H1 (cell line): ENCODE measurements at regions of chr10 and their contacts with region 1.

Region 1: GRCh38 chr10:3785257-3785850 is 345 bp upstream of the KLF6 start:
- DNase-seq: peak; percentile 92 to 98
- H3K4me3 ChIP-seq: peak overlapping the region; percentile 72 to 91 (median 86)
- H3K27ac ChIP-seq: peak overlapping the region; percentile 95
- H3K4me1 ChIP-seq: peaks cover 5 to 17% (median 12%) of the 10 kb centered on the region in 4 experiments
- H3K27me3 ChIP-seq: no peaks in the 10 kb centered on the region
- CTCF ChIP-seq: no peak
- EP300 ChIP-seq: peak in 1 of 2 experiments; percentile 16; a peak in 1 of 3 replicates
- POLR2A ChIP-seq: peak; percentile 93 to 99
- RAD21 ChIP-seq: 0 out of 4 replicates have a peak, but pooled peaks of 1 of the 2 experiments have one; percentile 2

Region 2: DNA sequence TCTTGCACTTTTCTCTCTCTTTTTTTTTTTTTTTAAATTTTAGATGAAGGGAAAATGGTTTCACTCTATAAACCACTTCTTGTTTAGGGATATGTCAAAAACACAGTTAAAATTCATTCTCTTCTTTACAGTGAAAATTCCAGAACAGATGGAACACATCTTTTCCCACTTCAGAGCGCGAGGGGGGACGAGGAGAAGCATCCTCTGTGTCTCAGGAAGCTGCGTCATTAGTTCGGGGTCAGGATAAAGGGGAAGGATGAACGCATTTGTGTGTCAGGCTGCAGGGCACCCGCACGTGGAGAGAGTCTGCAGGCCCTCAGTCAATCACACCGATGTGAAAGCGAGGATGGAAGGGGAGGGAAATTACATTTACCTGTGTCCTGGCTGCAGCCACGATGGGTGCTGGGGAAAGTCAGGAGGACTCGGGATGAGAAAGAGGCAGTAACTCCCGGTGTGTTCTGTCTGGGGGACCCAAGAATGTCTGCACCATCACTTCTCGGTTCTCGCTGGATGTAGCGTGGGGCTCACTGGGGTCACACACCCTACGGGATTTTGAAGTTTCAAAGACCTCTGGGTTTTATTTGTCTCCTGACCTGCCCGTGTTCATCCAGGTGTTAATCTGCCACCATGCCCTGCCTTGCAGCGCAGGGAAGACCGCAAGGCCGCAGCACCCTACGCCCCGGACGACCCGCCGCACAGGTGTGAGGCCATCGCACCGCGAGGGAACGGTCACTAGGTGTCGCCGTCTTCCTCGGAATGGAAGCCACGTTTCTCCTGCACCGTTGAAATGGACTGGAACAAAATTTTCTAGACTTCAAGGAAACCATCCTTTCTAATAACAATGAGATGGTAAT is 546.1 kb before region 1 on chr10:
- CTCF ChIA-PET with region 1: interaction called, 5 read pairs
- POLR2A ChIA-PET with region 1: interaction called, 12 read pairs
- DNase-seq: peak; percentile 58 to 85
- H3K4me3 ChIP-seq: no peak overlapping the region
- H3K27ac ChIP-seq: no peak overlapping the region
- H3K4me1 ChIP-seq: no peaks in the 10 kb centered on the region; a peak in 2 of 7 replicates
- H3K27me3 ChIP-seq: no peaks in the 10 kb centered on the region
- CTCF ChIP-seq: peak; percentile 89 to 100 (median 92)
- EP300 ChIP-seq: no peak
- POLR2A ChIP-seq: no peak
- RAD21 ChIP-seq: peak; percentile 98 to 99

Region 3: GRCh38 chr10:3720228-3721019 is 64.9 kb before region 1 on chr10:
- CTCF ChIA-PET with region 1: no interaction called
- POLR2A ChIA-PET with region 1: no interaction called
- DNase-seq: no peak
- H3K4me3 ChIP-seq: no peak overlapping the region
- H3K27ac ChIP-seq: no peak overlapping the region
- H3K4me1 ChIP-seq: no peaks in the 10 kb centered on the region
- H3K27me3 ChIP-seq: no peaks in the 10 kb centered on the region
- CTCF ChIP-seq: no peak
- EP300 ChIP-seq: no peak
- POLR2A ChIP-seq: no peak
- RAD21 ChIP-seq: no peak

Region 4: GRCh38 chr10:3745521-3745920 is 39.8 kb before region 1 on chr10:
- CTCF ChIA-PET with region 1: no interaction called
- POLR2A ChIA-PET with region 1: interaction called, 11 read pairs
- DNase-seq: no peak
- H3K4me3 ChIP-seq: no peak overlapping the region
- H3K27ac ChIP-seq: no peak overlapping the region
- H3K4me1 ChIP-seq: peaks cover 0 to 6% (median 5%) of the 10 kb centered on the region in 4 experiments; a peak in 4 of 7 replicates
- H3K27me3 ChIP-seq: no peaks in the 10 kb centered on the region
- CTCF ChIP-seq: no peak
- EP300 ChIP-seq: no peak
- POLR2A ChIP-seq: no peak
- RAD21 ChIP-seq: no peak